Activated T-helper 2 cell treated with anti-CD3 and anti-CD28 coated beads, Interferon-gamma antibody, Interleukin-2, Interleukin-4, amounts not matched to agents 10 μg/mL and 5 μg/mL and 100 μg/mL, durations not matched to agents 14 hours and 24 hours and 36 hours (primary cell): ENCODE measurements at regions of chr13 and their contacts with region 1.

Region 1: DNA sequence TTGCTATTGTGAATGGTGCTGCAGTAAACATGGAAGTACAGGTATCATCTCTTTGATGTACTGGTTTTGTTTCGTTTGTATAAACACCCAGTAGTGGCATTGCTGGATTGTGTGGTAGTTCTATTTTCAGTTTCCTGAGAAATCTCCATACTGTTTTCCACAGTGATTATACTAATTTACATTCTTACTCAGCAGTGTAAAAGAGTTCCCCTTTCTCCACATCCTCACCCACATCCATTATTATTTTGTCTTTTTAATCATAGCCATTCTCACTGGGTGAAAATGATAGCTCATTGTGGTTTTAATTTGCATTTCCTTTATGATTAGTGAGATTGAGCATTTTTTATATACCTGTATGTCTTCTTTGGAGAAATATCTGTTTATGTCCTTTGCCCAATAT is 62.3 kb upstream of the PARP4 start:
- DNase-seq: no peak
- H3K4me3 Mint-ChIP-seq: no peak overlapping the region
- H3K27ac Mint-ChIP-seq: no peak overlapping the region
- H3K4me1 Mint-ChIP-seq: peaks cover 11% of the 10 kb centered on the region
- H3K27me3 Mint-ChIP-seq: peaks cover 6% of the 10 kb centered on the region

Region 2: DNA sequence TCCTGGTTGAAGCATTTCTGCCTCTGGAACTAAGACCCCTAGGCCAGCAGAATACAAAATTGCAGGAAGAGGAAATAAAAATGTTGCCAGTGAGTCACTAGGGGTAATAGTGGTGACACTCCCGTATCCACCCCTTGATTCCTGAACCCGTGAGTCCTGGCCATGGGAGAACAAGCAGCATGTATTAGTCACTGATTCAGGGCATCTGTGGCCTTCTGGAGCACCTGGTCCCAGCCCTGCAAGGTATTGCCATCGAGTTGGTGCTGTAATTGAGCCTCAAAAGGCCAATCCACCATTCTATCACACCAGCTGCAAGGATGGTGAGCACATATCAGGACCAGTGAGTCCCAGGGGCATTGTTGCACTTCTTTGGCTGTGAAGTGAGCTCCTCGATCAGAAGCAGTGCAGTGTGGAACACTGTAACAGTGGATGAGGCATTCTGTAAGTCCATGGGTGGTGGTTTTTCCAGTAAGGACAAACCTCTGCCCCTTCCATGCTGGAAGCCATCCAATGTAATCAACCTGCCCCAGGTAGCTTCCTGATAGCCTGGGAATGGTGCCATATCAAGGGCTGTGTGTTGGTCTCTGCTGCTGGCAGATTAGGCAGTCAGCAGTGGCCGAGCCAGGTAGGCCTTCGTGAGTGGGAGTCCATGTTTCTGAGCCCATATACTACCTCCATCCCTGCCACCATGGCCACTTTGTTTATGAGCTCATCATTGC is 225.9 kb before region 1 on chr13:
- intact Hi-C with region 1: no loop called
- DNase-seq: no peak
- H3K4me3 Mint-ChIP-seq: no peak overlapping the region
- H3K27ac Mint-ChIP-seq: no peak overlapping the region
- H3K4me1 Mint-ChIP-seq: no peaks in the 10 kb centered on the region
- H3K27me3 Mint-ChIP-seq: peaks cover 9% of the 10 kb centered on the region

Region 3: GRCh38 chr13:24360106-24360505 is 214.7 kb before region 1 on chr13:
- intact Hi-C with region 1: no loop called
- DNase-seq: no peak
- H3K4me3 Mint-ChIP-seq: no peak overlapping the region
- H3K27ac Mint-ChIP-seq: no peak overlapping the region
- H3K4me1 Mint-ChIP-seq: no peaks in the 10 kb centered on the region
- H3K27me3 Mint-ChIP-seq: no peaks in the 10 kb centered on the region

Region 4: DNA sequence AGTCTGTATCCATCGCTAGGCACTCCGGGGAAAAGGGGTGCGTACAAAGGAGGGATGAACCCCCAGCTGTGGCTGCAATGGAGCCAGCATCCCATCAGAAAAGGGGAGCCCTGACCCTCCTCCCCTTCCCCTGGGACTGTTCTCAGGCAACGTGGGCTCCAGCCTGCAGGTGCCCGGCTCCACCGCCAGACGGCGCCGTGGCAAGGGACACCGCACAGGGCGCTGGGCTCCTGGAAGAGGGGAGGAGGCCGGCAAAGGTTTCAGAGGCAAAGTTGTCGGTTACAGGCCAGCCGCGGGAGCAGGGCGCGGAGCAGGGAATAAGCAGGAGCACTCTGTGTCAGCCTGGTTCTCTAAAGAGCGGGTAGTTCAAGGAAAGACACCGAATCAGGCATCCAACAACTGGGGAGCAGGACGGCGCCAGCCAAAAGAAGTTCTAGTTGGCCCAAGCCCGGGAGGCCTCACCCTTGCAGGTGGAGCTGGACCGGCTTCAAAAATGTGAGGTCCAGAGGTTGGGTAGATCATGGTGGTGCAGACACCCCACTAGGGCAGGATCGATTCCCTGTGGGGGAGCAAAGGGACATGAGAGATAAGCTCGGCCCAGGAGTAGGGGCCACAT is 52.4 kb after region 1 on chr13:
- intact Hi-C with region 1: loop called (anchors 5 kb)
- DNase-seq: no peak
- H3K4me3 Mint-ChIP-seq: no peak overlapping the region
- H3K27ac Mint-ChIP-seq: no peak overlapping the region
- H3K4me1 Mint-ChIP-seq: peaks cover 36% of the 10 kb centered on the region
- H3K27me3 Mint-ChIP-seq: no peaks in the 10 kb centered on the region

Region 5: GRCh38 chr13:24671386-24672107 is 96.7 kb after region 1 on chr13:
- intact Hi-C with region 1: loop called (anchors 2 kb)
- DNase-seq: no peak
- H3K4me3 Mint-ChIP-seq: no peak overlapping the region
- H3K27ac Mint-ChIP-seq: no peak overlapping the region
- H3K4me1 Mint-ChIP-seq: peaks cover 10% of the 10 kb centered on the region
- H3K27me3 Mint-ChIP-seq: no peaks in the 10 kb centered on the region

Region 6: GRCh38 chr13:24683838-24684599 is 109.2 kb after region 1 on chr13:
- intact Hi-C with region 1: loop called (anchors 5 kb)
- DNase-seq: peak; percentile 37
- H3K4me3 Mint-ChIP-seq: no peak overlapping the region
- H3K27ac Mint-ChIP-seq: peak overlapping the region; percentile 38
- H3K4me1 Mint-ChIP-seq: peaks cover 28% of the 10 kb centered on the region
- H3K27me3 Mint-ChIP-seq: peaks cover 47% of the 10 kb centered on the region